SK-N-SH (cell line): ENCODE measurements at regions of chr5 and their contacts with region 1.

Region 1: GRCh38 chr5:149035372-149035790 is 27.5 kb downstream of the SH3TC2 start:
- DNase-seq: peak; percentile 67
- H3K4me3 ChIP-seq: no peak overlapping the region; a peak in 1 of 4 replicates
- H3K27ac ChIP-seq: no peak overlapping the region
- H3K4me1 ChIP-seq: peaks cover 0 to 6% of the 10 kb centered on the region in 2 experiments; a peak in 2 of 4 replicates
- H3K27me3 ChIP-seq: no peaks in the 10 kb centered on the region
- CTCF ChIP-seq: peak; percentile 95
- EP300 ChIP-seq: no peak
- RAD21 ChIP-seq: peak; percentile 97

Region 2: GRCh38 chr5:148725677-148726076 is 309.7 kb before region 1 on chr5:
- CTCF ChIA-PET with region 1: interaction called, 618 read pairs
- POLR2A ChIA-PET with region 1: no interaction called
- DNase-seq: no peak
- H3K4me3 ChIP-seq: no peak overlapping the region
- H3K27ac ChIP-seq: no peak overlapping the region
- H3K4me1 ChIP-seq: peaks cover 0 to 3% of the 10 kb centered on the region in 2 experiments; a peak in 1 of 4 replicates
- H3K27me3 ChIP-seq: no peaks in the 10 kb centered on the region; the same call in 1 of the 2 replicates
- CTCF ChIP-seq: no peak
- EP300 ChIP-seq: no peak
- RAD21 ChIP-seq: no peak

Region 3: DNA sequence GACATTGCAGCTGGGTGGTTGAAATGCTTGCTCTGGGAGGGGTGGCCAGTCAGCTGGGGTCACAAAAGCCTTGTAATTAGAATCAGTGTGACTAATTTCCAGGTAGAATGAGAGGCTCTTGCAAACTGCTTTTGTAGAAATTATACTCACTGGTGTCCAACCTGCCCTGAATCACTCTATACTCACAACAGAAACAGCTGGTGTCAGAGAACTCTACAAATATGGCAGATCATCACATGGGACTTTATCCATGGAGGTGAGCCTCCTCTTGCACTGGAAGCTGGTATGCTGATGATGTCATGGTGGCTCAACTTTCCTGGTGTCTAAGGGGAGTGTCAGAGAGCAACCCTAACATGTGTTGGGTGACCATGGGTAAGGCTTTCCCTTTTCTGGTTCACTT is 43.8 kb before region 1 on chr5:
- CTCF ChIA-PET with region 1: interaction called, 12 read pairs
- POLR2A ChIA-PET with region 1: no interaction called
- DNase-seq: no peak
- H3K4me3 ChIP-seq: no peak overlapping the region
- H3K27ac ChIP-seq: no peak overlapping the region
- H3K4me1 ChIP-seq: no peaks in the 10 kb centered on the region
- H3K27me3 ChIP-seq: no peaks in the 10 kb centered on the region
- CTCF ChIP-seq: no peak
- EP300 ChIP-seq: no peak
- RAD21 ChIP-seq: no peak

Region 4: DNA sequence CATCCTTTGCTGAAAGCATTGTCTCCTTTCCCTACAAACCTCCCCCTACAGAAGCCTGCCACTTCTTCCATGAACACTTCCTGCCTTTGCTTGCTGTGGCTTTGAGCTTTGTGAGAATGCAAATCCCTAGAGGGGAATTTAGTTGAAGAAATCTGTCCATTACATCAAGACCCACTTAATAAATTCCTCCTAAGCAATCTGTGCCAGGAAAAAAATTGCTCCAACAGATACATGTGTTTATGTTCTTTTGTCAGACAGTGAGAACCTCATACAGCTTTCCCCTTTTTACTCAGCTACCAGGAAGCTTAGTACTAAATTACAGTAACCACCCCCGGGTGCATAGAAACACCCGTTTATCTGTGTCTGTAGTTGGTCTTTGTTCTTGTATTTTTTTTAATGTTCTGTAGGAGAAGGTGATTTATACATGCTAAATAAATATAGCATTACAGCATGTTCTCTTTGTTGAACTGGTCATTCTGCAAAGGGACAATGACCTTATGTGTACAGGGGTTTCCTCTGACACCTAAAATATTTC is 16.4 kb before region 1 on chr5:
- CTCF ChIA-PET with region 1: interaction called, 64 read pairs
- POLR2A ChIA-PET with region 1: no interaction called
- DNase-seq: no peak
- H3K4me3 ChIP-seq: no peak overlapping the region
- H3K27ac ChIP-seq: no peak overlapping the region
- H3K4me1 ChIP-seq: peaks cover 0 to 5% of the 10 kb centered on the region in 2 experiments; a peak in 2 of 4 replicates
- H3K27me3 ChIP-seq: no peaks in the 10 kb centered on the region
- CTCF ChIP-seq: no peak
- EP300 ChIP-seq: no peak
- RAD21 ChIP-seq: no peak

Region 5: DNA sequence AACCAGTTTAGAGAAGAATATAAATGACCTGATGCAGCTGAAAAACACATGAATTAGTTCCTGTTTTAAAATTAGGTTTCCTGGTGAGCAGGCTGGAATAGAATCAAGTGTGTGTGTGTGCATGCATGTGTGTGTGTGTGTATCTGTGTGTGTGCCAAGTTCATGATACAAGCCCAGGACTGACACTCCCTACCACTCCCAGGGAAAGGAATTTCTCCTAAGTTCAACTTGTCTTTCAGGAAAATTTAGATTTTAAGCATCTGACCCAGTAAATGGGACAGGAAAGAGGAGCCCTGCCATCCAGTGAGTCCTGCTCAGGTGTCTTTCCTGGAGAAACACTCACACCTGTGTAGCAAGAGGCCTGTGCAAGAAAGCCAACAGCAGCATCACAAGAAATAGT is 38.7 kb after region 1 on chr5:
- CTCF ChIA-PET with region 1: interaction called, 16 read pairs
- POLR2A ChIA-PET with region 1: no interaction called
- DNase-seq: no peak
- H3K4me3 ChIP-seq: no peak overlapping the region
- H3K27ac ChIP-seq: no peak overlapping the region
- H3K4me1 ChIP-seq: no peaks in the 10 kb centered on the region
- H3K27me3 ChIP-seq: no peaks in the 10 kb centered on the region
- CTCF ChIP-seq: no peak
- EP300 ChIP-seq: no peak
- RAD21 ChIP-seq: no peak